ENCODE measurements at regions of chr12 and their contacts with region 1.

Region 1: GRCh38 chr12:71626098-71626497 is 37.5 kb downstream of the ZFC3H1 start:
- DNase-seq: no peak
- H3K4me3 ChIP-seq: no peak overlapping the region
- H3K27ac ChIP-seq: peak overlapping the region; percentile 43
- H3K4me1 ChIP-seq: peaks cover 21% of the 10 kb centered on the region
- H3K27me3 ChIP-seq: no peaks in the 10 kb centered on the region
- CTCF ChIP-seq: no peak

Region 2: GRCh38 chr12:71236133-71236660 is 389.9 kb before region 1 on chr12:
- CTCF ChIA-PET with region 1: no interaction called
- POLR2A ChIA-PET with region 1: interaction called, 36 read pairs
- intact Hi-C with region 1: no loop called
- DNase-seq: no peak
- H3K4me3 ChIP-seq: no peak overlapping the region
- H3K27ac ChIP-seq: no peak overlapping the region
- H3K4me1 ChIP-seq: no peaks in the 10 kb centered on the region
- H3K27me3 ChIP-seq: no peaks in the 10 kb centered on the region
- CTCF ChIP-seq: no peak

Region 3: DNA sequence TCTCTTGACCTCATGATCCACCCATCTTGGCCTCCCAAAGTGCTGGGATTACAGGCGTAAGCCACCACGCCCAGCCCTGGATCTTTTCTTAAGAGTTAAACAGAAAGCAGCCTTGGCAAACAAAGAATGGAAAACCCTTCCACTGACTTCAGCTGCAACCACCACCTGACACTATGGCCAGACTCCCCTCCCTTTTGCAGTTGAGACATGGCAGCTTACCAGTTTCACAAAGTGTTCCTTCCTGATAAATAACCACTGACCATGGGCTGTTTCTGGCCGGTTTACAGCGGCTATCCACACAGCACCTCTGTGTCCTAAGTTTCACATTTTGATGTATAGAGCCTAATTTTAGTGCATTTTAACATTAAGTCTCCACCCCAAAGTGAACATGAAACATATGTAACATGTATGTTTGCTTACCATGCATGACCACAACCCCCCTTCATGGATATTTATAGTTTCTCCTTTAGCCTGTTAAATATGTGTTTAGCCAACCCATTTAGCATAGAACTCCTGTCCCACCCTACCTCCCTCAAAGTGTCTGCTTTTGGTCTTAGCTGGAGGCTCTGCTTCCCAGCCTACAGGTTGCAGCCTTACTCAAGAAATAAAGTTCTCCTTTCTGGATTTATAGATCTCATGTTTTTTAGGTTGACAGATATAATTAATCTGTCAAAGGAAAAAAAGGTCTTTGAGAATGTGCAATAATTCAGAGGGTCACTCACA is 95.8 kb after region 1 on chr12:
- CTCF ChIA-PET with region 1: no interaction called
- POLR2A ChIA-PET with region 1: interaction called, 10 read pairs
- intact Hi-C with region 1: no loop called
- DNase-seq: no peak
- H3K4me3 ChIP-seq: no peak overlapping the region
- H3K27ac ChIP-seq: no peak overlapping the region
- H3K4me1 ChIP-seq: no peaks in the 10 kb centered on the region
- H3K27me3 ChIP-seq: no peaks in the 10 kb centered on the region
- CTCF ChIP-seq: no peak

Measured in A673 (cell line).